CD8-positive, alpha-beta T cell (primary cell): ENCODE measurements at regions of chr21 and their contacts with region 1.

Region 1: GRCh38 chr21:34603002-34603709 is 11.8 kb downstream of the RCAN1 start:
- DNase-seq: peak in 8 of 9 experiments; percentile 6 to 64 (median 57)
- ATAC-seq: peak; percentile 64
- H3K4me3 ChIP-seq: no peak overlapping the region
- H3K4me3 Mint-ChIP-seq: no peak overlapping the region
- H3K27ac ChIP-seq: no peak overlapping the region
- H3K27ac Mint-ChIP-seq: no peak overlapping the region
- H3K4me1 ChIP-seq: no peaks in the 10 kb centered on the region
- H3K4me1 Mint-ChIP-seq: no peaks in the 10 kb centered on the region
- H3K27me3 ChIP-seq: no peaks in the 10 kb centered on the region
- H3K27me3 Mint-ChIP-seq: no peaks in the 10 kb centered on the region
- CTCF ChIP-seq: peak; percentile 30

Region 2: DNA sequence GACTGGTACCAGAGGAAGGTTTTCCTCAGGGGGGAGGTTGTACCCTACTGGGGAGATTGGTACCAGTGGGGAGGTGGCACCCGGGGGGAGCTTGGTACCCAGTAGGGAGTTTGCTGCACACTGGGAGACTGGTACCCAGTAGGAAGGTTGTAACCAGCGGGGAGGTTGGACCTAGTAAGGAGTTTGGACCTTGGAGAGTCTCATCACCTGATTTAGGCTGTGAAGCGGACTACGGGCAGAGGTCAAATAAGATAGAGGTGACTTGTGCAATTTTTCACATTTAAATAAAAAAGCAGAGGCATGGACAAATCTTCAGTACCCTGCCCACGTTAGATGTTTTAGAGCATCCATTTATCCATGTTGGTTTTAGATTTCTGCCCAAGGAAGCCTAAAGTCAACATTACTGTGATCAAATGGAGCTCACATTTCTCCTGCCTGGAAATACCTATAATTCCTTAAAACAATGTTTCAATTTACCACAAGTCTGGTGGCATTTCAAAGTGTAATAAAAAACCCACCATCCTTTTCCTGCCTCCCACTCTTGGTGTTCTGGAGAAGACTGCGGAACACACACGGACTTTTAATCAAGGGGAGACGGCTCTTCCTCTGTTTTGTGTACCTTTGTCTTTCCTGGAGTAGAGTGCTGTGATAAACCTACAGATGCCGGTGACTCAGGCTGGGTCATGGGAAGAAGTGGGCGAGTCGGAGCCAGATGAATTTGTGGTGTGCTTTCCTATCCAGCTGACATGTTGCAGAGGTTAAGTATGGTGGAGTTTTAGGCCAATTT is 566.0 kb before region 1 on chr21:
- CTCF ChIA-PET with region 1: no interaction called
- POLR2A ChIA-PET with region 1: no interaction called
- intact Hi-C with region 1: no loop called
- DNase-seq: no peak
- ATAC-seq: no peak
- H3K4me3 ChIP-seq: no peak overlapping the region
- H3K4me3 Mint-ChIP-seq: no peak overlapping the region
- H3K27ac ChIP-seq: no peak overlapping the region
- H3K27ac Mint-ChIP-seq: no peak overlapping the region
- H3K4me1 ChIP-seq: no peaks in the 10 kb centered on the region
- H3K4me1 Mint-ChIP-seq: no peaks in the 10 kb centered on the region
- H3K27me3 ChIP-seq: no peaks in the 10 kb centered on the region
- H3K27me3 Mint-ChIP-seq: no peaks in the 10 kb centered on the region
- CTCF ChIP-seq: no peak

Region 3: DNA sequence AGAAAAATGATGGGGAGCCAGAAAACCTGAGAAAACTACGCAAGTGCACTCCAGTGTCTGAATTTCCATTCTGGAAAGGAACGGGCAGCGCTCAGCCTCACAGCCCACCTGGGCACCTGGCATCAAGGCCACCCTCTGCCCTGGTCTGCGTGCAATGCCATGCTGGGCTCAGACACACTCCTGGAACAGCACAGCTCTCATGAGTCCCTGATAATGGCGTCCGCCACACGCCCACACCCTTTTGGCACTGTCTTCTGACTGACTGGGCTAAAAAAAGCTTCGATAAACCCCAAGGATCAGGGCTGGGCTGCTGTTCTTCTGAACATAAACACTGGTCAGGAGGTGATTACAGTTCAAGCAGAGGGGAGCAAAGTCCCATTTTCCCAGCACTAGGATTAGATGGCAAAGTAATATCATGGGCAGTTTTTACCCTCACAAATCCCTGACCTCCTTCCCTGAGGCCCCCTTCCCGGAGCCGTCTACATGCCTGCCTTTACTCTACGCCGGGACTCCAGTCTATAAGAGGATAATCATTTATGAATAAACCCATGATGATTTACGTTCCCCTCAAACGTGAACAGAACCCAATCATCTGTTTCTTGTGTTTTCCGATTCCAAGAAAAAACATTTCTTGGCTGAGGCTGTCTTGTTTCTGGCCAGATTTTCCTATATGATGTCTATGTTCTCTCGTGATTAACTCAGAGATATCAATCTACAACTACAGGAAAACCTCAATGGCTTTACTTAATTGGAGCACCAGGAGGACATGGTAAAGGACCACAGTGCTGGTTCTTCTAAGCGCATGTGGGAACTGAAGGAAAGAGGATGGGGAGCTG is 10.8 kb before region 1 on chr21:
- CTCF ChIA-PET with region 1: interaction called, 10 read pairs
- POLR2A ChIA-PET with region 1: no interaction called
- intact Hi-C with region 1: no loop called
- DNase-seq: no peak
- ATAC-seq: no peak
- H3K4me3 ChIP-seq: no peak overlapping the region
- H3K4me3 Mint-ChIP-seq: no peak overlapping the region
- H3K27ac ChIP-seq: no peak overlapping the region
- H3K27ac Mint-ChIP-seq: no peak overlapping the region
- H3K4me1 ChIP-seq: no peaks in the 10 kb centered on the region
- H3K4me1 Mint-ChIP-seq: peaks cover 12% of the 10 kb centered on the region
- H3K27me3 ChIP-seq: no peaks in the 10 kb centered on the region
- H3K27me3 Mint-ChIP-seq: no peaks in the 10 kb centered on the region
- CTCF ChIP-seq: no peak

Region 4: DNA sequence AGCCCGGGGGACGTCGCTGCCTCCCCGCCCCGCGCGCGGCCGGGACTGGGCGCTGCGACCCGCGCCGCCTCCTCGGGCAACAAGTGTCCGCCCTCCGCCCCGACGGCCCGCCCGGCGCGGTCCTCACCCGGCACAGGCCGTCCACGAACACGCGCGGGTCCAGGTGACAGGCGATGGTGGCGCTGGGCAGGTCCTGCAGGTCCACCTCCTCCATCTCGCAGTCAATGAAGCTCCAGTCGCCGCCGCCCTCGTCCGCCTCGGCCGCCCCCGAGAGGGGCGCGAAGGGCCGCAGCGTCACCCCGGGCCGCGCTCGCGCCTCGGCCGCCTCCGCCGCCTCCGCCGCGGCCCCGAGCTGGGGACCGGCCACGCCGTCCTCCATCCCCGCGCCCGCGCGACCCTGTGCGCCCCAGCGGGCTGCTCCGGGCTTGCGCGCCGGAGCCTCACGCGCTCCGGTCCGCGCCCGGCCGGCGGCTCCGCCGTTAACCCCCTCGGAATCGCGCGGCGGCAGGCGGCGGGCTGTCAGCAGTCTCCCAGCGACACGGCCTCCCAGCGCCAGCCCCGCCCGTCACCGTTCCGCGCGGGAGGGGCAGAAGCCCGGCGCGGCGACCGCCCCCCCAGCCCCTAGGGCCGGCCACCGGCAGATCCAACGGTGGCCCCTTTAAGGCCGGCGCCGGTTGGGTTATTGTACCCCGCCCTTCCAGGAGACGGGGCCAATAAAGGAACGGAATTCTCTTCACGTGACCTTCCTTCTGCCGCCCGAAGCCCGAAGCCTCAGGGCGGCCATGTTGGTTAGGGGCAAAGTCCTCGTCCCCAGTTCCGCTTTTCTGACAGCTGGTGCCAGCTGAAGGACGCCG is 11.7 kb after region 1 on chr21 and contains the start of gene RCAN1:
- CTCF ChIA-PET with region 1: interaction called, 17 read pairs
- POLR2A ChIA-PET with region 1: no interaction called
- intact Hi-C with region 1: no loop called
- DNase-seq: peak; percentile 64 to 94 (median 85)
- ATAC-seq: peak; percentile 95
- H3K4me3 ChIP-seq: peak within 1 kb of the TSS; percentile 51 to 63
- H3K4me3 Mint-ChIP-seq: peak within 1 kb of the TSS; percentile 90
- H3K27ac ChIP-seq: peak within 1 kb of the TSS; percentile 41 to 68
- H3K27ac Mint-ChIP-seq: peak within 1 kb of the TSS; percentile 91
- H3K4me1 ChIP-seq: peaks cover 13% of the 10 kb centered on the region
- H3K4me1 Mint-ChIP-seq: peaks cover 21% of the 10 kb centered on the region
- H3K27me3 ChIP-seq: no peaks in the 10 kb centered on the region
- H3K27me3 Mint-ChIP-seq: no peaks in the 10 kb centered on the region
- CTCF ChIP-seq: no peak
- total RNA-seq, gene RCAN1: 0.73 to 1.0 TPM

Region 5: GRCh38 chr21:34836103-34836932 is 233.2 kb after region 1 on chr21:
- CTCF ChIA-PET with region 1: no interaction called
- POLR2A ChIA-PET with region 1: no interaction called
- intact Hi-C with region 1: no loop called
- DNase-seq: peak in 1 of 9 experiments; percentile 37
- ATAC-seq: no peak
- H3K4me3 ChIP-seq: no peak overlapping the region
- H3K4me3 Mint-ChIP-seq: no peak overlapping the region
- H3K27ac ChIP-seq: no peak overlapping the region
- H3K27ac Mint-ChIP-seq: peak overlapping the region; percentile 69
- H3K4me1 ChIP-seq: peaks cover 16% of the 10 kb centered on the region
- H3K4me1 Mint-ChIP-seq: peaks cover 42% of the 10 kb centered on the region
- H3K27me3 ChIP-seq: no peaks in the 10 kb centered on the region
- H3K27me3 Mint-ChIP-seq: no peaks in the 10 kb centered on the region
- CTCF ChIP-seq: no peak

Region 6: DNA sequence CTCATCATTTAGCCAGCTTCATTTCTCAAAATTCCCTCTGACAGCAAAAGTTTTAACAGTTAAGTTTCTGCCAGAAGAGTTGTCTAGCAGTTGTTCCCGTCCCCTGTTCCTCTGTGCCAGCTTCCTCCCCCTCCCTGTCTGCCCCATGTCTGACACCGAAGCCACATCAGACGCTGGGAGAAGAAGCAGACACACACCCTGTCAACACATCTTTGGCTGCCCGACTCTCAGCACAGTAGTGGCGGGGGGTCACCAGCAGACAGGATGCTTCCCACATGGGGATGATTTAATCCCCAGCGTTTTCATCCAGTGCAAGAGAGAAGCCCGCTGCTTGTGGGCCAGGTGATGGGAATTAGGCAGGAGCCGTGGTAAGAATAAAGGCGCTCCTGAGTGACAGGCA is 825.3 kb after region 1 on chr21:
- CTCF ChIA-PET with region 1: no interaction called
- POLR2A ChIA-PET with region 1: no interaction called
- intact Hi-C with region 1: no loop called
- DNase-seq: peak; percentile 1 to 74 (median 52)
- ATAC-seq: peak; percentile 94
- H3K4me3 ChIP-seq: no peak overlapping the region
- H3K4me3 Mint-ChIP-seq: peak overlapping the region; percentile 52
- H3K27ac ChIP-seq: no peak overlapping the region
- H3K27ac Mint-ChIP-seq: peak overlapping the region; percentile 65
- H3K4me1 ChIP-seq: peaks cover 16% of the 10 kb centered on the region
- H3K4me1 Mint-ChIP-seq: peaks cover 20% of the 10 kb centered on the region
- H3K27me3 ChIP-seq: no peaks in the 10 kb centered on the region
- H3K27me3 Mint-ChIP-seq: peaks cover 7% of the 10 kb centered on the region
- CTCF ChIP-seq: no peak